Pancreas (tissue), 10 donors: ENCODE measurements at regions of chr1 and their contacts with region 1.

Region 1: GRCh38 chr1:160101037-160101716 is 2.8 kb upstream of the IGSF8 start:
- DNase-seq: peak; percentile 75 to 86 (median 80)
- ATAC-seq: peak; percentile 11 to 55 (median 44)
- H3K4me3 ChIP-seq: no peak overlapping the region
- H3K27ac ChIP-seq: peak overlapping the region in 3 of 4 donors; percentile 36 to 50 (median 47)
- H3K4me1 ChIP-seq: peaks cover 5 to 30% (median 11%) of the 10 kb centered on the region in 3 donors
- H3K27me3 ChIP-seq: no peaks in the 10 kb centered on the region
- CTCF ChIP-seq: peak; percentile 68 to 86 (median 82)

Region 2: DNA sequence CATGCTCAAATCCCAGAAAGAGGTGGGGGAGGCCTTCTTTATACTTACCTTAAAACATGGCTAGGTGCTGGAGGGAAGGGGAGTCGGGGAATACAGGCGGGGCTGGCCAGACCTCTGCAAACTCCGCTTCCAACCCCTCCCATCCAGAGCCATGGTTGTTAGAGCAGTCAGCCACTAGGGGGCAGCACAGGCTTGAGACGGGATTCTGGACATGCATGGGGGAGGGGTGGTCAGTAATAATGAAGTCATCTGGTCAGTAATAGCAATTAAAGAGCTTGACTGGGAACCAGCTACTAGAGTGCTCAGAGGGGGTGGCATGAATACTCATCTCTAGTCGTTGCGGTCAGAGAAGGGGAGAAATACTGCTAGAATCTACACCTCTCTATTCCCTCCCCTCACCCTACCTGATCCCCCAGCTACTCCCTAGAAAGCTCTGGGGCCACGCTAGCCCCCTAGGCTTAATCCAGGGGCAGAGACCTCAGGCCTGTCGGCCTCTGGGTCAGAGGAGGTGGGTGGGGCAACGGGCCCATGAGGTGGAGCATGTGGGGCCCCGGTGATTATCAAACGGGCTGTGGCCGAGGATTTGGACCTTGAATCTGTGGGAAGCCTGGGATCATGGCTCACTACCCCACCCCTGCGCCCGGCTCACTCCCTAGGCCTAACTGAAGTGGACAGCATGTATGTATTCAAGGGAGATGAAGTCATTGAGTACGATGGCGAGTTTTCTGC is 92.1 kb after region 1 on chr1:
- intact Hi-C with region 1: loop called in 1 of 3 experiments (anchors 10 kb)
- DNase-seq: peak; percentile 76 to 96 (median 90)
- ATAC-seq: peak; percentile 93 to 99 (median 98)
- H3K4me3 ChIP-seq: no peak overlapping the region
- H3K27ac ChIP-seq: no peak overlapping the region
- H3K4me1 ChIP-seq: no peaks in the 10 kb centered on the region
- H3K27me3 ChIP-seq: no peaks in the 10 kb centered on the region
- CTCF ChIP-seq: peak; percentile 92 to 96 (median 94)

Region 3: DNA sequence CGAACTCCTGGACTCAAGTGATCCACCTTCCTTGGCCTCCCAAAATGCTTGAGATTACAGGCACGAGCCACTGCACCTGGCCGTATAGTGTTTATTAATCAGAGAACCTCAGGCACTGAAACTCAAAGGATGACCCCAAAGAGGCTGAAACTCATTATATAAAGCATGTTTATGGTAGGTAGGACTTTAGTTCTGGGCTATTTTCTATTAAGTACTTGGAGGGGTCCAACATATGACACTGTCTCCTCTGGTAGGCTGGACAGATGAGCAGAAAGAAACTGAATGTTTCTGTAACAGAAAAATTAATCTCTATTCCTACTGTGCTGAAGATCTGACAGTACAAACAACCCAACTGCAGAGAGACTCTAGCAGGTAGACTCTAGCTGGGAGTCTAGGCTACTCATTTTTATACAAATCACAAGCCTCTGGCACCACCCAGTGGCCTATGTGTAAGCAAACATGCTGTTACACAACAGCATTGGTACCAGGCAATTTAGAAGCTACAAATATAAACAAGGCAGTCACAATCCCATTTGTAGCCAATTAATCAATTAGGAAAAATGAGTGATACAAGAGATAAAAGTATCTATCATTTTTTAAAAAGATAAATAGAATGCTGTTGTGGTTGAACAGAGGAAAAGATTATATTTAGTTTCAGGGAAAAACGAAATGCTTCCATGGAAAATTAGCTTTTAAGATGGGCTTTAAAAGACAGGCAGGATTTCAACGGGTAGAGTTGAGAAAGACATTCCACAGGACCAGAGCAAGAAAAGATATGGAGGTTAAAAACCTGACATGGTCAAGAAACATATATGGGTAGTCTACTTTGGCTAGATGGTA is 150.7 kb after region 1 on chr1:
- intact Hi-C with region 1: loop called in 1 of 3 experiments (anchors 10 kb)
- DNase-seq: peak in 5 of 6 donors; percentile 55 to 72 (median 69)
- ATAC-seq: peak; percentile 90 to 97 (median 96)
- H3K4me3 ChIP-seq: no peak overlapping the region
- H3K27ac ChIP-seq: peak overlapping the region in 2 of 4 donors; percentile 1 to 22
- H3K4me1 ChIP-seq: peaks cover 14 to 30% (median 26%) of the 10 kb centered on the region in 3 donors
- H3K27me3 ChIP-seq: no peaks in the 10 kb centered on the region
- CTCF ChIP-seq: peak; percentile 39 to 59 (median 47)

Region 4: DNA sequence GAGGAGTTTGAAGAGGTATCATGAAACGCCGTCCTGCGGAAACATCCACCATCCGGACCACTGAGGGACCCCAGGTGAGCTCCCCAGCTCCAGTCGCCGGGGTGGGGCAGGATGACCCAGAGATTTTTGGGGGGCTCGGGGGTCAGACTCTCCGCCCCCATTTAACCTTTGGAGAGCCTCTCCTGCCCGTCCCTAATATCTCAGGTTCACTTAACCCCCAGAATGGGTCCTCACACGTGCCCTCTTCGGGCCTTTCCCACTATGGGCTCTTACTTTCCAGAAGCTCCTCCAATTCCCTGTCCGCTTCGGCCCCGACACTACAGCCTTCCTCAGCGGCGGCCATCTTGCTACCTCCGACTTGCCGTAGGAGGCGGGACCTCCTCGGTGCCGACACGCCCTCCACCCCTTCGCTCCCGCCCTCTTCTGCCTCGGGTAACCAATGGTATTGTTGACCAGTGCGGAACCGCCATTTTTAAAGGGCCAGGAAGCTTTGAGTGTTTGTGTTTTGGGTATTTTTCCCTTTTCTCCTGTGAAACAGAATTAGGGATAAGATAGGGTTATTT is 183.7 kb after region 1 on chr1 and contains the start of gene PEX19:
- intact Hi-C with region 1: loop called in 1 of 3 experiments (anchors 10 kb)
- DNase-seq: peak; percentile 91 to 96 (median 94)
- ATAC-seq: peak; percentile 100
- H3K4me3 ChIP-seq: peak within 1 kb of the TSS; percentile 68 to 97 (median 82)
- H3K27ac ChIP-seq: peak within 1 kb of the TSS in 3 of 4 donors; percentile 50 to 62 (median 54)
- H3K4me1 ChIP-seq: peaks cover 6 to 15% (median 14%) of the 10 kb centered on the region in 3 donors
- H3K27me3 ChIP-seq: no peaks in the 10 kb centered on the region
- CTCF ChIP-seq: no peak
- total RNA-seq, gene PEX19: 15.0 to 27.9 (median 22.6) TPM

Region 5: GRCh38 chr1:160376525-160377131 is 275.5 kb after region 1 on chr1:
- intact Hi-C with region 1: loop called in 2 of 3 experiments (anchors 10 kb)
- DNase-seq: peak in 2 of 6 donors; percentile 27 to 45
- ATAC-seq: peak; percentile 81 to 91 (median 90)
- H3K4me3 ChIP-seq: no peak overlapping the region
- H3K27ac ChIP-seq: peak overlapping the region in 1 of 4 donors; percentile 27
- H3K4me1 ChIP-seq: no peaks in the 10 kb centered on the region
- H3K27me3 ChIP-seq: no peaks in the 10 kb centered on the region
- CTCF ChIP-seq: peak; percentile 68 to 83 (median 81)